MCF 10A (cell line): ENCODE measurements at regions of chr12 and their contacts with region 1.

Region 1: GRCh38 chr12:6285063-6285477 is 25.4 kb upstream of the PLEKHG6 start:
- DNase-seq: peak; percentile 76
- H3K4me3 Mint-ChIP-seq: no peak overlapping the region
- H3K27ac Mint-ChIP-seq: no peak overlapping the region
- H3K4me1 Mint-ChIP-seq: peaks cover 34% of the 10 kb centered on the region
- H3K27me3 Mint-ChIP-seq: no peaks in the 10 kb centered on the region
- CTCF ChIP-seq: peak; percentile 94

Region 2: DNA sequence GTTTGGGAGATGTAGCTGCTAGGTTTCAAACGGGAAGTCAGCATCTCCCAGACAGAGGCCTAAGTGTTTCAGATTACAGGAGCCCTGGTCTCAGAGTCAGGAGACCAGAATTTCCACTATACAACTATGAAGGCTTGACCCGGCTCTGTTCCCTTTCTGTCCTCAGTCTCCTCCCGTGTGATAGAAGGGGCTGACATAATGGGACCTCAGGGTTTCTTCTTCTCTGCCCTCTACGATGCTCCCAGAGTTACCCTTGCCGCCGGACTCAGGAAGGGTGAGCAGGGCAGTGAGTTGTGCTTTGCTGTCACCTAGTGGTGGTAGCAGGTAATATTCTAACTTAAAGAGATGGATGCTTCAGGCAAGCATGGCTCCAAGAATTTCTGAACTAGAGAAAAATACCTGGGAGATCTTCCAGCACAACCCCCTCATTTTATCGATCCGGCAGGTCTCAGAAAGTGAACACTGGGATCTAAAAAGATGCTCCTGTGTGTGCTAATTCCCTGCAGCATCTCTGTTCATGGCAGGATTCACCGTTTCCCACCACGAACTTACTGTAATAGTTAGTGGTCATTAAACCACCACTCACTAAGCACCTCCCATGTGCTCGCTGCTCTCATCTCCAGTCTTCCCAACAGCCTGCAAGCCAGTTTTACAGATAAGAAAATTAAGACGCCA is 245.0 kb before region 1 on chr12:
- CTCF ChIA-PET with region 1: interaction called, 16 read pairs
- POLR2A ChIA-PET with region 1: interaction called, 3 read pairs
- intact Hi-C with region 1: no loop called
- DNase-seq: peak; percentile 74
- H3K4me3 Mint-ChIP-seq: no peak overlapping the region
- H3K27ac Mint-ChIP-seq: no peak overlapping the region
- H3K4me1 Mint-ChIP-seq: peaks cover 10% of the 10 kb centered on the region
- H3K27me3 Mint-ChIP-seq: no peaks in the 10 kb centered on the region
- CTCF ChIP-seq: peak; percentile 89

Region 3: DNA sequence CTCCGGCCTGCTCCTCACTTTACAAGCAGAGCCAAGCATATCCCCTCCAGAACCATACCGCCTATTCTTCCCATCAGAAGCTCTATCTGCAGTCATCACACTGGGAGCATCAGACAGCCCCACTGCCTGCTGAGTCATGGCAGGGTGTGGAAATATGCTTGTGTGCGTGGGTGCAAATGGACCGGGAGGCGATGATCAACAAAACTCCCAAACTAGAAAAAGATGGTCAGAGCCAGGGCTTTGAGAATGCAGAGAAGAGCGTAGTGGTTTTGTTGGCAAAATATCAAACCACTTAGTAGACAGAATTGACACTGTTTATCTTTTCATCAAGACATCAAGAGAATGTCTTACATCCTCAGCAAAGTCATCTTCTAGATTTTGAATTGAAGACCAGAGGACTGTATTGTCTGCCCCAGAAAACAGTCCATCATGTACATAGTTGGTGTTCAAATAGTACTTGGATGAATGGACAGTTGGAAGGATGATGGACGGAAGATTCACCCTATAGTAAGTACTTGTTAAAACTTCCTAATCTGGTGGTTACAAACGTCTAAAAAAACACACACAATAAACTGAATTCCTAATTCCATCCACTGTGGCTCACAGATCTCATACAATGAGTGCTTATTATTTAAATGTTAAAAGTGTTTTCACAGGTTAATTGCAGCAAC is 215.5 kb before region 1 on chr12:
- CTCF ChIA-PET with region 1: interaction called, 65 read pairs
- POLR2A ChIA-PET with region 1: interaction called, 6 read pairs
- intact Hi-C with region 1: loop called (anchors 1 kb)
- DNase-seq: peak; percentile 79
- H3K4me3 Mint-ChIP-seq: no peak overlapping the region
- H3K27ac Mint-ChIP-seq: no peak overlapping the region
- H3K4me1 Mint-ChIP-seq: peaks cover 11% of the 10 kb centered on the region
- H3K27me3 Mint-ChIP-seq: peaks cover 11% of the 10 kb centered on the region
- CTCF ChIP-seq: no peak

Region 4: DNA sequence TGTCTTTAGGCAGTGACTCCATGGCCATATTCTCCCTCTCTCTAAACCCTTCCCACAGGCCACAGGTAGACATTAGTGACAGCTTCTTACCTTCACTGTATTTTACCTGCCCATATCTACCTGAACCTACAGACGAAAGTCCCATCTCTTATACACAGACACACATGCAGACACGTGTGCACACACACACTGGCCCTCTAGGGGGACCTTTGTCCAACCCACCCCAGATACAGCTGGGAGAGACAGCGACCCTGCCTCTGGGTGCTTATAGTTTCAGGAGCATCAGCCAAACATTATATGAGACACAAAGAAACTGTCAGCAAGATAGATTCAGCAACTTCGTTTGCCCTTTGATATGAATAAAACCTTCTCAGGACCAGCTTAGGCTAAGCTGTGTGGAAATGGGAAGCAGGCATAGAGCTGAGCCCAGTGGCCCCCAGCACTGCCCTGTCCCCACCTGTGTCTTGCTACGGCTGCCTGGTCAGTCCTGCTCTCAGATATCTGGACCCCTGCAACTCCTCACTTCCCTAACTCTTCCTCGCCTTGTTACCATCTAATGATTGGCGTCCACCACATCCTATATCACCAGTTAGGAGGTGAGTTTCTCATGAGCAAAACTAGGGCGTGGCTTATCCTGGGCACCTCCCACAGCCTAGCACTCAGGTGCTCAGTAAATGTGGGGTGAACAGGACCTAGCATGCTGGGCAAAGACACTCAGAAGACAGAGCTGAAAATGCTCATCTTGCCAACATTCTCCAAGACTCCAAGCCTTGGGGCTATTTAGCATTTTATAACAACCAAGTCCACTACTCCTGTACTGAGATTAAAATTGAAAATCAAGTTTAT is 96.9 kb before region 1 on chr12:
- CTCF ChIA-PET with region 1: interaction called, 369 read pairs
- POLR2A ChIA-PET with region 1: interaction called, 40 read pairs
- intact Hi-C with region 1: no loop called
- DNase-seq: peak; percentile 24
- H3K4me3 Mint-ChIP-seq: no peak overlapping the region
- H3K27ac Mint-ChIP-seq: no peak overlapping the region
- H3K4me1 Mint-ChIP-seq: peaks cover 20% of the 10 kb centered on the region
- H3K27me3 Mint-ChIP-seq: peaks cover 21% of the 10 kb centered on the region
- CTCF ChIP-seq: no peak

Region 5: DNA sequence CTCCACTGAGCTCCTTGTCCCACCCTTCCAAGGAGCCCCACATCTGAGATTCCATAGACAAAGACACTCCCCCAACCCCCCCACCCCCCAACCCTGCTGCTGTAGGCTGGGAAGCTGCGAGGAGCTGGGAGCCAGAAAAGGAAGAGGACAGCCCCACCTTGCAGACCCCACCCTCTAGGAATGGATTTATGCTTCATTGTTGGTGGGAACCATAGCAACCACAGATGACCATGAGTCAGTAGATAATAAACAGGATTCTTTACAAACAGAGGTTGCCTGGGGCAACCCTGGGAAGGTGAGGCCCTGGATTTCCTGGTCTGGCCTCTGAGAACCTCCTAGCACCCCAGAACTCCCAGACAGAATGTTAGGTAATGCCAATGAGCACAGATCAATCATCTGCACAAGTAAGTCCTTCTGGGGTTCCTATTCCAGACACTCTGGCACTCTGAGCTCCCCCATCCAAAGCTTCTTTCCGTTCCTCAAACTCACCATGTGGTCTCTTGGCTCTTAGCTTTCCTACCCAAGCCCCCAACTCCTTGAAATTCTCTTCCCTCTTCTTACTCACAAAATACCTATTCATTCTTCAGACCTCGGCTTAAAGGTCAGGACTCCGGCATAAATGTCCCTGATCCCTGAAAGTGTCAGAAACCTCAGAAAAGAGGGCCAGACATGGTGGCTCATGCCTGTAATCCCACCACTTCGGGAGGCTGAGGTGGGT is 10.2 kb after region 1 on chr12:
- CTCF ChIA-PET with region 1: interaction called, 6 read pairs
- POLR2A ChIA-PET with region 1: interaction called, 13 read pairs
- intact Hi-C with region 1: no loop called
- DNase-seq: peak; percentile 88
- H3K4me3 Mint-ChIP-seq: no peak overlapping the region
- H3K27ac Mint-ChIP-seq: peak overlapping the region; percentile 80
- H3K4me1 Mint-ChIP-seq: peaks cover 18% of the 10 kb centered on the region
- H3K27me3 Mint-ChIP-seq: no peaks in the 10 kb centered on the region
- CTCF ChIP-seq: no peak

Region 6: GRCh38 chr12:6341417-6342139 is 56.5 kb after region 1 on chr12 and contains the start of gene TNFRSF1A:
- CTCF ChIA-PET with region 1: interaction called, 8 read pairs
- POLR2A ChIA-PET with region 1: interaction called, 23 read pairs
- intact Hi-C with region 1: no loop called
- DNase-seq: peak; percentile 89
- H3K4me3 Mint-ChIP-seq: no peak within 1 kb of the TSS
- H3K27ac Mint-ChIP-seq: no peak within 1 kb of the TSS
- H3K4me1 Mint-ChIP-seq: peaks cover 37% of the 10 kb centered on the region
- H3K27me3 Mint-ChIP-seq: no peaks in the 10 kb centered on the region
- CTCF ChIP-seq: no peak
- total RNA-seq, gene TNFRSF1A: 103 and 110 TPM in 2 replicates